ENCODE measurements at regions of chr6 and their contacts with region 1.

Region 1: DNA sequence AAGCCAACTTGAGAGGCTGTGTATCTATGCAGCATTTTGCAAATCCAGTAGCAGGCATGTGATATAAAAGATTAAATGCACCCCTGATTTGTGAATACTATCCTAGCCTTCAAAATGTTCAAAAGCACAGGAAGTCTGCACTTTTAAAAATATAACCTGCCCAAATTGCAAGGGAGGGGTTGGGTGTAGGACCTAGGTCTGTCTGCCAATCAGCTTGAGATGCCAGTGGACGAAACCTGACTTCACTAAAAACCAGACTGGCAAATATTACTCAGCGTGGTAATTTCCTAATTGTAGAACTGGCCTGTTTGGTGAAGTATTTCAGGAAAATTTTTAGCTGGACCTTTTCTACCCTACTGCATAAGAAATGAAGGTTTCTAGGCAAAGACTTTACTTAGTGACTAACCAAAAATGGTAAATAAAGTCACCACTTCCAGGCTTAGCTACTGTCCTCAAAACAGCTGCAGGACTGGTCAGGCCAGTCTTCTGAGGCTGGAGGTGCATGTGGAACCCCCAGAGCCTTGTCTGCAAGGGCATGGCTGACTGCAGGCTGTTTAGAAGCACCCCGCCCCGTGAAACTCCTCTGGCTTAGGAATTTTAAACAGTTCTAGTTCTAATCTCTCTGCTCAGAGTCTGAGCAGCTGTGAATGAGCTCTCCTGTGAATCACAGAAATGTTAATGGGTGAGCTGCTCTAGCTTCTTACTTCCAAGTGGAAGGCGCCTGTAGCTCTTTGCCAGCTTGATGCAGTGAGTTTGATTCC is 104.5 kb upstream of the ESR1 start:
- DNase-seq: no peak
- H3K4me3 Mint-ChIP-seq: no peak overlapping the region
- H3K27ac Mint-ChIP-seq: peak overlapping the region; percentile 59
- H3K4me1 Mint-ChIP-seq: peaks cover 56% of the 10 kb centered on the region
- H3K27me3 Mint-ChIP-seq: peaks cover 10% of the 10 kb centered on the region

Region 2: DNA sequence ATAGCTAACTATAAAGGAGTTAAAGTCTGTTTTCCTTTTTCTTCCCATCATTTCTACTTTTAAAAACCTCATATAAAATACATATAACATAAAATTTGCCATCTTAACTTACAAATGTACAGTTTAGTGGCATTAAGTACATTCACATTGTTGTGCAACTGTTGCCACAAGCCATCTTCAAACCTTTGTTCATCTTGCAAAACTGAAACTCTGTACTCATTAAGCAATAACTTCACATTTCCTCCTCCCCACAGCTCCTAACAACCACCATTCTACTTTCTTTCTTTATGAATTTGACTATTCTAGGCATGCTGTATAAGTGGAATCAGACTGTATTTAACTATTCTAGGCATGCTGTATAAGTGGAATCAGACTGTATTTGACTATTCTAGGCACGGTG is 204.7 kb before region 1 on chr6:
- intact Hi-C with region 1: loop called (anchors 5 kb)
- DNase-seq: no peak
- H3K4me3 Mint-ChIP-seq: no peak overlapping the region
- H3K27ac Mint-ChIP-seq: no peak overlapping the region
- H3K4me1 Mint-ChIP-seq: peaks cover 18% of the 10 kb centered on the region
- H3K27me3 Mint-ChIP-seq: peaks cover 33% of the 10 kb centered on the region

Region 3: GRCh38 chr6:151723152-151723551 is 20.1 kb after region 1 on chr6:
- intact Hi-C with region 1: loop called (anchors 1 kb)
- DNase-seq: peak; percentile 34
- H3K4me3 Mint-ChIP-seq: no peak overlapping the region
- H3K27ac Mint-ChIP-seq: peak overlapping the region; percentile 32
- H3K4me1 Mint-ChIP-seq: peaks cover 52% of the 10 kb centered on the region
- H3K27me3 Mint-ChIP-seq: peaks cover 2% of the 10 kb centered on the region

Region 4: GRCh38 chr6:151765444-151765886 is 62.4 kb after region 1 on chr6:
- intact Hi-C with region 1: loop called (anchors 2 kb)
- DNase-seq: peak; percentile 40
- H3K4me3 Mint-ChIP-seq: no peak overlapping the region
- H3K27ac Mint-ChIP-seq: no peak overlapping the region
- H3K4me1 Mint-ChIP-seq: peaks cover 34% of the 10 kb centered on the region
- H3K27me3 Mint-ChIP-seq: peaks cover 22% of the 10 kb centered on the region

Region 5: GRCh38 chr6:152170705-152171667 is 468.0 kb after region 1 on chr6:
- intact Hi-C with region 1: loop called (anchors 1 kb)
- DNase-seq: peak; percentile 62
- H3K4me3 Mint-ChIP-seq: peak overlapping the region; percentile 59
- H3K27ac Mint-ChIP-seq: peak overlapping the region; percentile 95
- H3K4me1 Mint-ChIP-seq: peaks cover 25% of the 10 kb centered on the region
- H3K27me3 Mint-ChIP-seq: no peaks in the 10 kb centered on the region

Region 6: DNA sequence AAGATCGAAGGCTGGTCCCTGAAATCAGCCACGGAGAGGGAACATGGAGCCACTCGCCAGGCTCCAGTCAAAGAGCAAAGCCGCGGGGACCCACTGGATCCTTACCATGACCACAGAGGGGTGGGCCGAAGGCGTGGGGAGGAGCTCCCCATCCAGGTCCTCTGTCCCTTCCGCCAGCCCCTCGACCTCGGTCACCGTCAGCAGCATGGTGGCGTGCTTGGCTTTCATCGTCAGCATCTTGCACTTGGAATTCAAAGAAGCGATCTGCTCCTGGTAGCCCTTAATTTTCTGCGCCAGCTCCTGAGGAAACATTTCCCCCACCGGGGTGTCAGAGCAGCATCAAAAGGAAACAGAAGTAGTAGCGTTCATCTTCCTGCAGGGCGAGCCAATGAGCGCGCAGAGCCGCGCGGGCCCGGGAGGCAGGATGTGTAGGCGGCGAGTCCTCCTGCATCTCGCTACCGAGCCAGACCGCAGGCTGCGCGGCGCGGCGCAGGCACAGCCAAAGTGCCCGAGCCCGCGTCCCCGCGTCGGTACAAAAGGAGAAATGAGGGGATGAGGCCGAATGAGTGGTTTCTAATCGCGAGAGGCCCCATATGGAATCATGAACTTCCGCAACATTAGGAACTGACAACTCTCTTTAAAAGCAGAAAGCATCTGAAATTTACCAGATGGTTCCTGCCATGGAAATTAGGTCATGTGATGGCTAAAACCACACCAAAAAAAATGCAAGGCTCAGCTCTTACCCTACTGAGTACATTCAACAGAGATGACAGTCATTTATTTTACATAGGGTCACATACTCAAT is 598.9 kb after region 1 on chr6:
- intact Hi-C with region 1: loop called (anchors 2 kb)
- DNase-seq: peak; percentile 88
- H3K4me3 Mint-ChIP-seq: peak overlapping the region; percentile 98
- H3K27ac Mint-ChIP-seq: peak overlapping the region; percentile 99
- H3K4me1 Mint-ChIP-seq: peaks cover 41% of the 10 kb centered on the region
- H3K27me3 Mint-ChIP-seq: peaks cover 4% of the 10 kb centered on the region

Measured in activated T-helper 1 cell treated with anti-CD3 and anti-CD28 coated beads, Interleukin-12 subunit alpha, Interleukin-12 subunit beta, Interleukin-2, Interleukin-4 antibody, amounts not matched to agents 30 ng/mL and 10 ng/mL and 1 ng/mL, durations not matched to agents 14 hours and 24 hours and 36 hours (primary cell).